Heart right ventricle (tissue), 16 donors: ENCODE measurements at regions of chr4 and their contacts with region 1.

Region 1: GRCh38 chr4:119785963-119786362 is 157.4 kb upstream of the PDE5A start:
- DNase-seq: no peak
- ATAC-seq: no peak
- H3K4me3 ChIP-seq: no peak overlapping the region
- H3K27ac ChIP-seq: no peak overlapping the region
- H3K4me1 ChIP-seq: peaks cover 0 to 4% (median 0%) of the 10 kb centered on the region in 9 donors
- H3K27me3 ChIP-seq: no peaks in the 10 kb centered on the region
- CTCF ChIP-seq: peak in 7 of 9 donors; percentile 16 to 60 (median 45)

Region 2: GRCh38 chr4:119559044-119559647 is 226.8 kb before region 1 on chr4:
- intact Hi-C with region 1: loop called in 1 of 10 experiments (anchors 5 kb)
- DNase-seq: no peak
- ATAC-seq: no peak
- H3K4me3 ChIP-seq: no peak overlapping the region
- H3K27ac ChIP-seq: no peak overlapping the region
- H3K4me1 ChIP-seq: no peaks in the 10 kb centered on the region
- H3K27me3 ChIP-seq: no peaks in the 10 kb centered on the region
- CTCF ChIP-seq: peak; percentile 18 to 69 (median 53)

Region 3: GRCh38 chr4:120399826-120400225 is 613.9 kb after region 1 on chr4:
- intact Hi-C with region 1: no loop called
- DNase-seq: no peak
- ATAC-seq: no peak
- H3K4me3 ChIP-seq: no peak overlapping the region
- H3K27ac ChIP-seq: no peak overlapping the region
- H3K4me1 ChIP-seq: no peaks in the 10 kb centered on the region
- H3K27me3 ChIP-seq: no peaks in the 10 kb centered on the region
- CTCF ChIP-seq: no peak